ENCODE measurements at regions of chr9 and their contacts with region 1.

Region 1: DNA sequence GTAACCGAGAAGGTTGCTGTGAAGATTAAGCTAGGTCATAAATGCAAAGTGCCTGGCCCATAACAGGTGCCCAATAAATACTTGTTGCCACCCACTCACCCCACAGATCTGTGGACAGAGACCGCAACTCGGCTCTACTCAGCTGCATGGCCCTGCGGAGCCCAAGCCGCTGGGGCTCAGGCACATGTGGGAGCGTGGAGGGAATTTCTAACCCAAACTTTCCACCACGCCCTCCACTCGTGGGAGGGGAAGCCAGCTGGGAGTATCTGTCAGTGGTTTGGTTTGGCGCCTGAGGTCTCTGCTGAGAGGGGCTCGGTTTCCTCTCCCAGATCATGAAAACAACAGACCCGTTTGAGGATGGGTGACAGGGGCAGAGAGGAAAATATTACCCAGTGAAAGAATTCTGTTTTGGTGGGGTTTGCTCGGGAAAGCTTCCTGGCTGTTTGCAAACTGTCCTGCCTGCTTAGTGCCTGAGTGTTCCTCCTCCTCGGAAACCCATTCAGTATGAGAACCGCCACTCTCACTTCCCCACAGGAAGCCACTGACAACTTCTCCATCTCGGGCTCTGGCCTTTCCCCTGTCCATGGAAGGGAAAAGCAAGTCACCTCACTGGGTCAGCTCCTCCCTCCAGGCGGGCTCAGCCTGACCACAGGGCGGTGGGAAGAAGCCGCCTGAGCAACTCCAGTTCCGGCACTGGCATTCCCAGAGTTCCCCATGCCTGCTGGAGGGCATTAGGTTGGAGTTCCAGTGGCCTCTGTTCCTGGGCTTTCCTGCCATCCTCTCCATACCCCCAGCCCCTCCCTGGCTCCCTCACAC is 60.1 kb downstream of the RGS3 start:
- DNase-seq: peak; percentile 73
- H3K4me3 ChIP-seq: peak overlapping the region; percentile 57
- H3K27ac ChIP-seq: peak overlapping the region; percentile 77
- H3K4me1 ChIP-seq: peaks cover 65% of the 10 kb centered on the region
- CTCF ChIP-seq: no peak

Region 2: DNA sequence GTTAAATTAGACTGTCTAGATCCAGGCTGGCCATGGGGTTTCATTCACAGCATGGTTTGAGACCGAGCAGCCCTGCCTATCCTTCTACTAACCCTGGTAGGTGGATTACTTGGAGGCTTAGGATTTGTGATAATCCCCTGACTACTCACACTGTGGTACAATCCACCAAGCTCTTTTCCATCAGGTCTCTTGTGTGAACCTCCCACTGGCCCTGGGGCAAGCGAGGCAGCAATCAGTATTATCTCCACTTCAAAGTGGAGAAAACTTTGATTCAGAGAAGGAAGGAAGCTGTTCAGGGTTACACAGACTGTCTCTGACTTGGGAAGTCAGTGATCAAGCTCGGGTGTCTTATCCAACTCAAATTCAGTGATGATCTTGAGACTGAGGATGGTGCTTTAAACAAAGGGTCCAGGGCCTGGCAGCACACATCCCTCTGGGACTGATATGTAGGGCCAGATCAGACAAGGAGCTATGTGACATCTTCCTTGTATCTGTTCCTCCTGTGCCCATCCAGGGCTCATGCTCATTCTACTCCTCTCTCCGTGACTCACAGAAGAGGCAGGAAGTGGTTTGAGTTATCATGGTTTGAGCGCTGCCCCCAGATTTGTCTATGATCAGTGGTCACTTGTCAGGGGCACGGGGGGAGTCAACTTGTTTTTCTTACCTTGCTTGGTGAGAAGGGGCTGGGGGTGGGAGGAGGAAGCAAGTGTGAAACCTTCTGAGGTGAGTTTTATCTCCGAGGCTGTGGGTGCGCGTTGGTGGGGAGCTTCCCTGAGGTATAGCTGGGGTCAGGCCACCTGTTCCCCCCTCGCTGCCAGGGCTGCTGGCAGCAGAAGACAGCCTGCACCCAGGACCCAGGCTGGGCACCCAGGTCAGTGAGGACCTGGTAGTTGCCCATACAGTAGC is 11.5 kb before region 1 on chr9:
- CTCF ChIA-PET with region 1: no interaction called
- POLR2A ChIA-PET with region 1: interaction called, 13 read pairs
- intact Hi-C with region 1: no loop called
- DNase-seq: peak; percentile 38
- H3K4me3 ChIP-seq: no peak overlapping the region
- H3K27ac ChIP-seq: no peak overlapping the region
- H3K4me1 ChIP-seq: peaks cover 31% of the 10 kb centered on the region
- CTCF ChIP-seq: no peak